PC-3 (cell line): ENCODE measurements at regions of chr11 and their contacts with region 1.

Region 1: DNA sequence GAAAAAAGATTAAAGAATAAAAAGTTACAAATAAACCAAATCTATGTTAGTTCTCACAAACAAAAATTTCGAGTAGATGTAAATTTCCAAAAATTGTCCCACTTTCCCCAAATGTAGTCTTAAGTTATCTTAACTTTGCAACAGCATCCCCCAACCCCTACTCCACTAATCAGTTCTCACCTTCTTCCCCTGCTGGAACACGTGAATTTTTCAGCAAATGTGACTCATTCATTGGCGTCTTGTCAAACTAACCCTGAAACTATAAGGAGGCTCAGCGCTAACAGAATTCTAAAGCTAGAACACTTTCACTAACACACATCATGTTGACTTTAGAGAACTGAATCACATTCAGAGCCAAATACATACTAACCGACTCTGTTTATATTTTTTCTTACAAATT is 46.1 kb downstream of the PHF21A start:
- DNase-seq: peak; percentile 65
- ATAC-seq: peak; percentile 84
- H3K4me3 ChIP-seq: no peak overlapping the region
- H3K27ac ChIP-seq: no peak overlapping the region
- H3K4me1 ChIP-seq: peaks cover 8% of the 10 kb centered on the region
- H3K27me3 ChIP-seq: no peaks in the 10 kb centered on the region
- CTCF ChIP-seq: no peak

Region 2: GRCh38 chr11:45918331-45918941 is 156.7 kb before region 1 on chr11:
- CTCF ChIA-PET with region 1: no interaction called
- POLR2A ChIA-PET with region 1: no interaction called
- intact Hi-C with region 1: no loop called
- DNase-seq: peak; percentile 70
- ATAC-seq: peak; percentile 67
- H3K4me3 ChIP-seq: peak overlapping the region; percentile 96
- H3K27ac ChIP-seq: peak overlapping the region; percentile 69
- H3K4me1 ChIP-seq: peaks cover 3% of the 10 kb centered on the region; the same call in 1 of the 2 replicates
- H3K27me3 ChIP-seq: no peaks in the 10 kb centered on the region
- CTCF ChIP-seq: no peak

Region 3: DNA sequence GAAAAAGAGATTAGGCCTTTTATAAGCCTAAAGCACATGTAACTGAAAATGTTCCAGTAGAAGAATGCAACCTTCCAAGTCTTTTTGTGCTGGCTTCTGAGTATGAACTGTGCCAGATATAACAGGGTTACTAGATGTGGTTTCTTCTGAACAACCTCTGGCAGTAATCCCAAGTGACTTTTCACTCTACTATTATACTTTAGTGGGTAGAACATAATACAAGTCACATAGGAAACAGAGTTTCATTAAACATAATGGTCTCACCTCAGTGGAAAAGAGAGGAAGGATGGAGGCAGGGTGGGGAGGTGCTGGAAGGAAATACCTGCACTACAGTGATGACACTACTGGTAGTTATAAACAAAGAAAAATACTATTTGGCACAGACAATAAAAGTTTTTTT is 35.2 kb before region 1 on chr11:
- CTCF ChIA-PET with region 1: no interaction called
- POLR2A ChIA-PET with region 1: no interaction called
- intact Hi-C with region 1: loop called (anchors 5 kb)
- DNase-seq: no peak
- ATAC-seq: no peak
- H3K4me3 ChIP-seq: no peak overlapping the region
- H3K27ac ChIP-seq: no peak overlapping the region
- H3K4me1 ChIP-seq: no peaks in the 10 kb centered on the region
- H3K27me3 ChIP-seq: no peaks in the 10 kb centered on the region
- CTCF ChIP-seq: no peak

Region 4: GRCh38 chr11:46064221-46064620 is 10.9 kb before region 1 on chr11:
- CTCF ChIA-PET with region 1: no interaction called
- POLR2A ChIA-PET with region 1: interaction called, 11 read pairs
- intact Hi-C with region 1: no loop called
- DNase-seq: no peak
- ATAC-seq: no peak
- H3K4me3 ChIP-seq: no peak overlapping the region
- H3K27ac ChIP-seq: no peak overlapping the region
- H3K4me1 ChIP-seq: no peaks in the 10 kb centered on the region
- H3K27me3 ChIP-seq: no peaks in the 10 kb centered on the region
- CTCF ChIP-seq: no peak